Calu3 (cell line): ENCODE measurements at regions of chr1 and their contacts with region 1.

Region 1: DNA sequence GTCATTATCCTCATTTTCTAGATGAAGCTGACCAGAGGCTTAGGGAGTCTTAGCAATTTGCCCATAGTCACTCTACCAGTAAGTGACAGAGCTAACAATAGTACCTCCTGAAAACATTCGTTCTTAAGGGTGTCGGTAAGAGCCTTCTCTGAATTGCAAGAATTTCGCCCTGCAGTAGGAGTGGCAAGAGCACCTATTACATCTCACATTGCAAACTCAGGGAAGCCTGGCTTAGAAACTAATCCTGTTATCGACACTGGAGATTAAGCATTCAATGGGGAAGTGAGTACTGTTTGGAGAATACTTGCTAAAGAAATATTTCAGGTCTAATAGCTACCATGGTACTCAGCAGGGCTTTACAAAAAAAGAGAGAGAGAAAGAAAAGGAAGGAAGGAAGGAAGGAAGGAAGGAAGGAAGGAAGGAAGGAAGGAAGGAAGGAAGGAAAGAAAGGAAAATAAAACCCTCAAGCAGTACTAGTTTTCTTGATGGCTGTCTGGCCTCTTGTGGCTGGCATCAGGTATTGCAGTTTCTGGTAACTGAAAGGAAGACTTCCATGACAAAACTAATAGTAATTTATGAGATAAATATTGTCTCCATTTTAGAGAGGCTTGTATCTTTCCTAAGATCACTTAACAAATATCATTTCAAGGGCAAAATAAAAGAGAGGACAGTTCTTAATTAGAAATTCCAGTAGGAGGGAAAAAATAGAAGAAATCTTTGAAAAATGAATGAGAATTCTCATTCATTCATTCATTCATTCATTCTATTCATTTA is 10.4 kb downstream of the C1orf226 start:
- DNase-seq: peak; percentile 35
- H3K4me3 Mint-ChIP-seq: no peak overlapping the region
- H3K27ac Mint-ChIP-seq: no peak overlapping the region
- H3K4me1 Mint-ChIP-seq: peaks cover 35% of the 10 kb centered on the region
- H3K27me3 Mint-ChIP-seq: peaks cover 8% of the 10 kb centered on the region
- CTCF ChIP-seq: peak; percentile 75

Region 2: DNA sequence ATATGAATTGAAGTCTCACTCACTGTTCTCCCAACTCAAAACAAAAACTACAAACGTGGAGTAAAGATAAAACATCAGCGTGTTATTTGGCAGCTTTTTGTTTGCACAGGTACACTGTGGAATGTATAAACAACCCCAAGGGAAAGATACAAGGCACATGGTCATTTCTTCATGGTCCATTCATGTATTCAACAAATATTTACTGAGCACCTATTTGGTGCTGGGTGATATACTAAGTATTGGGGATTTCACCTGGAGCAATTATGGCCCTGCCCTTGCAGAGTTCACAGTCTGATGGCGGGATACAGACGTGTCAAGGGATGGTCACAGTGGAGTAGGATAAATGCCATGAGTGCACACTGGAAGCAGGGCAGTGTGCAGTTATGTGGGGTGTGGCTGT is 151.4 kb before region 1 on chr1:
- CTCF ChIA-PET with region 1: interaction called, 3 read pairs
- intact Hi-C with region 1: loop called (anchors 5 kb)
- DNase-seq: no peak
- H3K4me3 Mint-ChIP-seq: no peak overlapping the region
- H3K27ac Mint-ChIP-seq: no peak overlapping the region
- H3K4me1 Mint-ChIP-seq: peaks cover 26% of the 10 kb centered on the region
- H3K27me3 Mint-ChIP-seq: no peaks in the 10 kb centered on the region
- CTCF ChIP-seq: no peak

Region 3: DNA sequence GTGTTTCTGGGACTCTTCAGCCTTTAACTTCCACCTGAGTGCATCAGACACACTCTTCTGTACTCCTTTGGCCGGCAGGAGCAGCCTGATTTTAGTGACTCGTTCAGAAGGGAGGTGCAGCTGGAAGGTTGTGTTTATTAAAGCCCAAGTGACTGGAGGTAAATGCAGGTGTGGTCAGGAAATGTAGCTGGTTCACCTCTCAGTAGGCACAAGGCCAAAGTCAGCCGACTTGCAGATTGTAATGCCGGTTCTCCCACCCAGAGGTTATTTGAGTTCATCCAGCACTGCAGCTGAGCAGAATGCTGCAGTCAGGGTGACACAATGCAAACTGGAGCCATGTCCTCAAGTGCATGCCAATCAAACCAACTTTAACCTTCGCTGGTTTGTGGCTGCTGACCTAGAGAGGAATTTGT is 106.8 kb before region 1 on chr1:
- CTCF ChIA-PET with region 1: no interaction called
- intact Hi-C with region 1: loop called (anchors 2 kb)
- DNase-seq: peak; percentile 84
- H3K4me3 Mint-ChIP-seq: peak overlapping the region; percentile 2
- H3K27ac Mint-ChIP-seq: no peak overlapping the region
- H3K4me1 Mint-ChIP-seq: peaks cover 25% of the 10 kb centered on the region
- H3K27me3 Mint-ChIP-seq: no peaks in the 10 kb centered on the region
- CTCF ChIP-seq: no peak

Region 4: GRCh38 chr1:162357681-162358266 is 34.2 kb before region 1 on chr1:
- CTCF ChIA-PET with region 1: interaction called, 12 read pairs
- intact Hi-C with region 1: loop called (anchors 1 kb)
- DNase-seq: peak; percentile 48
- H3K4me3 Mint-ChIP-seq: no peak overlapping the region
- H3K27ac Mint-ChIP-seq: no peak overlapping the region
- H3K4me1 Mint-ChIP-seq: no peaks in the 10 kb centered on the region
- H3K27me3 Mint-ChIP-seq: no peaks in the 10 kb centered on the region
- CTCF ChIP-seq: peak; percentile 70